ENCODE measurements at regions of chr14 and their contacts with region 1.

Region 1: DNA sequence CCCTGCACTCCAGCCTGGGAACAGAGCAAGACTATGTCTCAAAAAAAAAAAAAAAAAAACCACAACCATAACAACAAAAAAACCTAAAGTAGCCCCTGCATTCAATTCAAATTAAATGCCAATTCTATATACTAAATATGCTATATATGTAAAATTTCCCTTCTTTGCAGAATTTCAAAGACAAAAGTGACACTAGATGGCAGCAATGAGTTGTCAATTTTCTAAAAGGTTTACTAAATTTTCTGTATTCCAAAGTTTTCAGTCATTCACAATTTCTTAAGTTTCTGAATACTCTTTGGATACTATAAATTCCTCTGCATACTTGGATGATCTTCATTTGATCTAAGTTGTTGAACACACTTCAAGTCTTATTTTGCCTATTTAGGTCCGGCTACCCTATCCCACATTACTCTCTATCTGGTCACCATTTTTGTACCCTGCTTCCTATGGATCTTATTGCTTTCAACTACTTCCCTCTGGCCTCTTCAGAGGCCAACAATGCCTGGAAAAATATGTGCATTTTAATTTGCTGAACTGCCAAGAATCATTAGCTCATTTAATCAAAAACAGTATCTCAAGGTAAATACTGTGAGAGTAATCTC is 27.9 kb downstream of the HNRNPC start:
- DNase-seq: no peak
- ATAC-seq: no peak
- H3K4me3 Mint-ChIP-seq: no peak overlapping the region
- H3K27ac Mint-ChIP-seq: peak overlapping the region; percentile 75
- H3K4me1 Mint-ChIP-seq: peaks cover 77% of the 10 kb centered on the region
- H3K27me3 Mint-ChIP-seq: no peaks in the 10 kb centered on the region

Region 2: GRCh38 chr14:20998664-20999366 is 242.5 kb before region 1 on chr14 and contains the start of gene SLC39A2:
- CTCF ChIA-PET with region 1: no interaction called
- POLR2A ChIA-PET with region 1: no interaction called
- intact Hi-C with region 1: no loop called
- DNase-seq: no peak
- ATAC-seq: peak; percentile 36
- H3K4me3 Mint-ChIP-seq: no peak within 1 kb of the TSS
- H3K27ac Mint-ChIP-seq: no peak within 1 kb of the TSS
- H3K4me1 Mint-ChIP-seq: peaks cover 23% of the 10 kb centered on the region
- H3K27me3 Mint-ChIP-seq: no peaks in the 10 kb centered on the region
- total RNA-seq, gene SLC39A2: 0.21 to 0.30 TPM

Region 3: GRCh38 chr14:21039585-21040369 is 201.5 kb before region 1 on chr14:
- CTCF ChIA-PET with region 1: no interaction called
- POLR2A ChIA-PET with region 1: no interaction called
- intact Hi-C with region 1: no loop called
- DNase-seq: peak; percentile 29
- ATAC-seq: peak; percentile 75
- H3K4me3 Mint-ChIP-seq: no peak overlapping the region
- H3K27ac Mint-ChIP-seq: no peak overlapping the region
- H3K4me1 Mint-ChIP-seq: peaks cover 6% of the 10 kb centered on the region
- H3K27me3 Mint-ChIP-seq: peaks cover 5% of the 10 kb centered on the region

Region 4: GRCh38 chr14:21191809-21192446 is 49.4 kb before region 1 on chr14:
- CTCF ChIA-PET with region 1: no interaction called
- POLR2A ChIA-PET with region 1: no interaction called
- intact Hi-C with region 1: no loop called
- DNase-seq: peak; percentile 82
- ATAC-seq: peak; percentile 94
- H3K4me3 Mint-ChIP-seq: peak overlapping the region; percentile 53
- H3K27ac Mint-ChIP-seq: peak overlapping the region; percentile 13
- H3K4me1 Mint-ChIP-seq: peaks cover 4% of the 10 kb centered on the region
- H3K27me3 Mint-ChIP-seq: no peaks in the 10 kb centered on the region

Region 5: DNA sequence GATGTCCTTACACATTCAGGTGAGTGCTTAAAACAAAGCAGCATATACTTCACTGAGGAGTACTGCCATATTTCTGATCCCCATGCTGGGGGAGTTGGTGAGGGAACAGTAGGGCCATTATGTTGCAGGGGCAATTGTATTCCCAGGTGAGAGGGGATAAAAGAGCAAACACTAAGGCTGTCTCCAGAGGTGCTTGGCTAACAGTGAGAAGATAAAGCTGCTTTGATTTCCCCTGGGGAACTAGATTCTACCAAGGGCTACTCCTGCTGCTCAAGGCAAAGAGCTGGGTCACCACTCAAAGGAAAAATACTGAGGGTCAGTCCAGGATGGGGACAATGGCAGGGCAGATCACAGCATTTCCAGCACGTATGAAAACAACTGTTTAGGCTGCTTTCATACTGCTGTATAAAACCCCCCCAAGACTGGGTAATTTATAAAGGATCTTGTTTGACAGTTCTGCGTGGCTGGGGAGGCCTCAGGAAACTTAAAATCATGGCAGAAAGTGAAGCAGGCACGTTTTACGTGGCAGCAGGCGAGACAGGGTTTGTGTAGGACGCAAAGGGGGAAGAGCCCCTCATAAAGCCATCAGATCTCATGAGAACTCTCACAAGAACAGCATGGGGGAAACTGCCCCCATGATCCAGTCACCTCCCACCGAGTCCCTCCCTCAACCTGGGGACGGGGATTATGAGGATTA is 37.7 kb before region 1 on chr14:
- CTCF ChIA-PET with region 1: no interaction called
- POLR2A ChIA-PET with region 1: no interaction called
- intact Hi-C with region 1: no loop called
- DNase-seq: no peak
- ATAC-seq: no peak
- H3K4me3 Mint-ChIP-seq: no peak overlapping the region
- H3K27ac Mint-ChIP-seq: peak overlapping the region; percentile 55
- H3K4me1 Mint-ChIP-seq: peaks cover 8% of the 10 kb centered on the region
- H3K27me3 Mint-ChIP-seq: no peaks in the 10 kb centered on the region

Region 6: DNA sequence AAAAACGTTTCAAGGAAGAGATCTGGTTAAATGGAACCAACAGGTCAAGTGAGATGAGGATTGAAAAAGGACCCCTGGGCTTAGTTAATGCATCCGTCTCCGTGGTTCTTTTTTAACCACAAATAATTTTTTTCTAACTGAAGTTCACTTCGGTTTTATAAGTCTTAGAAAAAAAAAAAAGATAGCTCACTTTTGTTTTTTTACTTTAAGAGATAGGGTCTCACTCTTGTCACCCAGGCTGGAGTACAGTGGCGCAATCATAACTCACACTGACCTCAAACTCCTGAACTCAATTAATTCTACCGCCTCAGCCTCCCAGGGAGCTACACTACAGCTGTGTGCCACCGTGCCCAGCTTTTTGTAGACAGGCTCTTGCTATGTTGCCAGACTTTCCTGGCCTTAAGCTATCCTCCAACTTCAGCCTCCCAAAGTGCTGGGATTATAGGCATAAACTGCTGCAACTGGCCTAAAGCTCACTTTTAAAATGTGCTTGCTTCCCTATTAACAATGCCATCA is 16.1 kb after region 1 on chr14:
- CTCF ChIA-PET with region 1: interaction called, 12 read pairs
- POLR2A ChIA-PET with region 1: interaction called, 9 read pairs
- intact Hi-C with region 1: loop called in 1 of 2 experiments (anchors 2 kb)
- DNase-seq: no peak
- ATAC-seq: peak; percentile 34
- H3K4me3 Mint-ChIP-seq: peak overlapping the region; percentile 65
- H3K27ac Mint-ChIP-seq: peak overlapping the region; percentile 86
- H3K4me1 Mint-ChIP-seq: peaks cover 76% of the 10 kb centered on the region
- H3K27me3 Mint-ChIP-seq: no peaks in the 10 kb centered on the region

Region 7: GRCh38 chr14:21346549-21347135 is 105.3 kb after region 1 on chr14:
- CTCF ChIA-PET with region 1: interaction called, 4 read pairs
- POLR2A ChIA-PET with region 1: no interaction called
- intact Hi-C with region 1: loop called in 1 of 2 experiments (anchors 5 kb)
- DNase-seq: no peak
- ATAC-seq: no peak
- H3K4me3 Mint-ChIP-seq: no peak overlapping the region
- H3K27ac Mint-ChIP-seq: no peak overlapping the region
- H3K4me1 Mint-ChIP-seq: peaks cover 3% of the 10 kb centered on the region
- H3K27me3 Mint-ChIP-seq: no peaks in the 10 kb centered on the region